ENCODE measurements at regions of chr17 and their contacts with region 1.

Region 1: GRCh38 chr17:63406689-63407330 is 39.3 kb downstream of the CYB561 start:
- DNase-seq: peak; percentile 35 to 85 (median 65)
- ATAC-seq: peak; percentile 87
- H3K4me3 ChIP-seq: no peak overlapping the region
- H3K4me3 Mint-ChIP-seq: no peak overlapping the region
- H3K27ac ChIP-seq: no peak overlapping the region
- H3K27ac Mint-ChIP-seq: no peak overlapping the region
- H3K4me1 ChIP-seq: no peaks in the 10 kb centered on the region
- H3K4me1 Mint-ChIP-seq: peaks cover 2% of the 10 kb centered on the region
- H3K27me3 ChIP-seq: no peaks in the 10 kb centered on the region
- H3K27me3 Mint-ChIP-seq: no peaks in the 10 kb centered on the region
- CTCF ChIP-seq: peak; percentile 83

Region 2: DNA sequence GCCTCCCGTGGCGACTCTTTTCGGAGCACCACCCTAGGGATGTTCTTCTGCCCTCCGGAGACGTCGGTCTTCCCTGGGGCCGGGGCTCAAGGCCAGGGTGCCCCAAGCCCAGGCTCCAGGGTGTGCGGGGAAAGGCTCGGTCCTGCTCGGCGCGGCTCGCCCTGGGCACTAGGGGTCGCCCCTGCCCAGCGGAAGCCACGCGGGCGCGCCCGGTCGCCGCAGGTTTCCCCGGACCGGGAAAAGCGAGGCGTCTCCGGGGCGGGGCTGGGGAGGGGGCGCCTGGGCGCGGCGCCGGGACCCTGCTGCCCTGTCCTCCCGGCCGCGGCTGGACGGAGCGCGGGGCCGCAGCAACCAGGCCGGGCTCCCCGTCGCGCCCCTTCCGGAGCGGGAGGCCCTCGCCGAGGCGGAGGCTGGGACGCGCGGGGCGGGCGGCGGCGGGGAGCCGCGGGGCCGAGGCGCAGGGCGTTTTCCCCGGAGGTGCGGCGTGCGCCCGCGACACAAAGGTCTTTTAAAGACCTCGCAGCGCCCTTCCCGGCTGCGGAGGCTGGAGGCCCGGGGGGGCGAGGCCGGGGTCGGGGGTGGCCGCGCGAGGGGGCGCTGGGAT is 702.9 kb before region 1 on chr17:
- CTCF ChIA-PET with region 1: interaction called, 14 read pairs
- POLR2A ChIA-PET with region 1: no interaction called
- intact Hi-C with region 1: loop called (anchors 1 kb)
- DNase-seq: peak; percentile 34 to 88 (median 71)
- ATAC-seq: peak; percentile 91
- H3K4me3 ChIP-seq: peak overlapping the region; percentile 49
- H3K4me3 Mint-ChIP-seq: peak overlapping the region; percentile 63
- H3K27ac ChIP-seq: no peak overlapping the region
- H3K27ac Mint-ChIP-seq: no peak overlapping the region
- H3K4me1 ChIP-seq: peaks cover 5% of the 10 kb centered on the region
- H3K4me1 Mint-ChIP-seq: peaks cover 7% of the 10 kb centered on the region
- H3K27me3 ChIP-seq: peaks cover 0 to 2% of the 10 kb centered on the region in 2 experiments
- H3K27me3 Mint-ChIP-seq: peaks cover 3% of the 10 kb centered on the region
- CTCF ChIP-seq: peak; percentile 76

Region 3: GRCh38 chr17:62995377-62995885 is 411.4 kb before region 1 on chr17:
- CTCF ChIA-PET with region 1: interaction called, 4 read pairs
- POLR2A ChIA-PET with region 1: no interaction called
- intact Hi-C with region 1: loop called (anchors 5 kb)
- DNase-seq: peak in 3 of 9 experiments; percentile 18 to 40 (median 22)
- ATAC-seq: no peak
- H3K4me3 ChIP-seq: no peak overlapping the region
- H3K4me3 Mint-ChIP-seq: no peak overlapping the region
- H3K27ac ChIP-seq: no peak overlapping the region
- H3K27ac Mint-ChIP-seq: no peak overlapping the region
- H3K4me1 ChIP-seq: no peaks in the 10 kb centered on the region
- H3K4me1 Mint-ChIP-seq: peaks cover 24% of the 10 kb centered on the region
- H3K27me3 ChIP-seq: no peaks in the 10 kb centered on the region
- H3K27me3 Mint-ChIP-seq: no peaks in the 10 kb centered on the region
- CTCF ChIP-seq: peak; percentile 28

Region 4: GRCh38 chr17:63140255-63140654 is 266.6 kb before region 1 on chr17:
- CTCF ChIA-PET with region 1: no interaction called
- POLR2A ChIA-PET with region 1: no interaction called
- intact Hi-C with region 1: no loop called
- DNase-seq: peak in 1 of 9 experiments; percentile 16
- ATAC-seq: no peak
- H3K4me3 ChIP-seq: no peak overlapping the region
- H3K4me3 Mint-ChIP-seq: no peak overlapping the region
- H3K27ac ChIP-seq: no peak overlapping the region
- H3K27ac Mint-ChIP-seq: no peak overlapping the region
- H3K4me1 ChIP-seq: no peaks in the 10 kb centered on the region
- H3K4me1 Mint-ChIP-seq: no peaks in the 10 kb centered on the region
- H3K27me3 ChIP-seq: no peaks in the 10 kb centered on the region
- H3K27me3 Mint-ChIP-seq: no peaks in the 10 kb centered on the region
- CTCF ChIP-seq: no peak

Region 5: GRCh38 chr17:63395075-63395805 is 11.6 kb before region 1 on chr17:
- CTCF ChIA-PET with region 1: interaction called, 16 read pairs
- POLR2A ChIA-PET with region 1: no interaction called
- intact Hi-C with region 1: no loop called
- DNase-seq: no peak
- ATAC-seq: no peak
- H3K4me3 ChIP-seq: no peak overlapping the region
- H3K4me3 Mint-ChIP-seq: no peak overlapping the region
- H3K27ac ChIP-seq: no peak overlapping the region
- H3K27ac Mint-ChIP-seq: no peak overlapping the region
- H3K4me1 ChIP-seq: no peaks in the 10 kb centered on the region
- H3K4me1 Mint-ChIP-seq: no peaks in the 10 kb centered on the region
- H3K27me3 ChIP-seq: no peaks in the 10 kb centered on the region
- H3K27me3 Mint-ChIP-seq: no peaks in the 10 kb centered on the region
- CTCF ChIP-seq: no peak

Region 6: GRCh38 chr17:63434876-63435684 is 28.3 kb after region 1 on chr17:
- CTCF ChIA-PET with region 1: interaction called, 12 read pairs
- POLR2A ChIA-PET with region 1: no interaction called
- intact Hi-C with region 1: no loop called
- DNase-seq: peak; percentile 11 to 84 (median 59)
- ATAC-seq: peak; percentile 96
- H3K4me3 ChIP-seq: no peak overlapping the region
- H3K4me3 Mint-ChIP-seq: peak overlapping the region; percentile 58
- H3K27ac ChIP-seq: peak overlapping the region in 1 of 2 experiments; percentile 60
- H3K27ac Mint-ChIP-seq: peak overlapping the region; percentile 84
- H3K4me1 ChIP-seq: peaks cover 37% of the 10 kb centered on the region
- H3K4me1 Mint-ChIP-seq: peaks cover 34% of the 10 kb centered on the region
- H3K27me3 ChIP-seq: no peaks in the 10 kb centered on the region
- H3K27me3 Mint-ChIP-seq: no peaks in the 10 kb centered on the region
- CTCF ChIP-seq: peak; percentile 31

Region 7: GRCh38 chr17:63455417-63455816 is 48.6 kb after region 1 on chr17:
- CTCF ChIA-PET with region 1: no interaction called
- POLR2A ChIA-PET with region 1: no interaction called
- intact Hi-C with region 1: no loop called
- DNase-seq: no peak
- ATAC-seq: no peak
- H3K4me3 ChIP-seq: no peak overlapping the region
- H3K4me3 Mint-ChIP-seq: no peak overlapping the region
- H3K27ac ChIP-seq: no peak overlapping the region
- H3K27ac Mint-ChIP-seq: no peak overlapping the region
- H3K4me1 ChIP-seq: no peaks in the 10 kb centered on the region
- H3K4me1 Mint-ChIP-seq: peaks cover 4% of the 10 kb centered on the region
- H3K27me3 ChIP-seq: no peaks in the 10 kb centered on the region
- H3K27me3 Mint-ChIP-seq: peaks cover 2% of the 10 kb centered on the region
- CTCF ChIP-seq: no peak

Region 8: GRCh38 chr17:63611354-63611753 is 204.5 kb after region 1 on chr17:
- CTCF ChIA-PET with region 1: interaction called, 14 read pairs
- POLR2A ChIA-PET with region 1: no interaction called
- intact Hi-C with region 1: no loop called
- DNase-seq: peak in 1 of 9 experiments; percentile 37
- ATAC-seq: peak; percentile 13
- H3K4me3 ChIP-seq: no peak overlapping the region
- H3K4me3 Mint-ChIP-seq: no peak overlapping the region
- H3K27ac ChIP-seq: peak overlapping the region in 1 of 2 experiments; percentile 39
- H3K27ac Mint-ChIP-seq: peak overlapping the region; percentile 91
- H3K4me1 ChIP-seq: peaks cover 28% of the 10 kb centered on the region
- H3K4me1 Mint-ChIP-seq: peaks cover 31% of the 10 kb centered on the region
- H3K27me3 ChIP-seq: no peaks in the 10 kb centered on the region
- H3K27me3 Mint-ChIP-seq: no peaks in the 10 kb centered on the region
- CTCF ChIP-seq: no peak

Region 9: GRCh38 chr17:64081802-64082799 is 675.3 kb after region 1 on chr17:
- CTCF ChIA-PET with region 1: no interaction called
- POLR2A ChIA-PET with region 1: no interaction called
- intact Hi-C with region 1: no loop called
- DNase-seq: peak in 5 of 9 experiments; percentile 17 to 68 (median 48)
- ATAC-seq: peak; percentile 83
- H3K4me3 ChIP-seq: peak overlapping the region in 1 of 2 experiments; percentile 10
- H3K4me3 Mint-ChIP-seq: peak overlapping the region; percentile 35
- H3K27ac ChIP-seq: peak overlapping the region in 1 of 2 experiments; percentile 50
- H3K27ac Mint-ChIP-seq: peak overlapping the region; percentile 66
- H3K4me1 ChIP-seq: peaks cover 37% of the 10 kb centered on the region
- H3K4me1 Mint-ChIP-seq: peaks cover 14% of the 10 kb centered on the region
- H3K27me3 ChIP-seq: no peaks in the 10 kb centered on the region
- H3K27me3 Mint-ChIP-seq: no peaks in the 10 kb centered on the region
- CTCF ChIP-seq: no peak